Posterior vena cava (tissue), 2 donors: ENCODE measurements at regions of chr3 and their contacts with region 1.

Region 1: DNA sequence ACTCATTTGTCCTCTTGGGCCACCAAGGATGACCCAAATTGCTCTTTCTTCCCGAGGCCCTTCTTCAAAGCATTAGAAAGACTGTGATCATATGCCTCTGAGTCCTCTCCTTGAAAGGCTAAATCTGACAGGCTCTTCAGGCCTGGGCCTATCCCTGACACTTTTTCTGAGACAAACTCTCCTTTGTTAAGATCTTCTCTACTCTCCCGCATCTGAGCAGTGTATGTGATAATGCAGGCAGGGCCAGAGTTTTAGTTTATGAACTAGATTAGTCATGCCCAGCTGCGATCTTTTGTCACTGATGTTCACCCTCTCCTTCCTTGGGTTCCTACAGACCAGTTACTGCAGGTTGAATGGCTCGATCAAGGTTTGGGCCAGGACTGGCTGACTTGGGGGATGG is 39.2 kb downstream of the MASP1 start:
- DNase-seq: no peak

Region 2: DNA sequence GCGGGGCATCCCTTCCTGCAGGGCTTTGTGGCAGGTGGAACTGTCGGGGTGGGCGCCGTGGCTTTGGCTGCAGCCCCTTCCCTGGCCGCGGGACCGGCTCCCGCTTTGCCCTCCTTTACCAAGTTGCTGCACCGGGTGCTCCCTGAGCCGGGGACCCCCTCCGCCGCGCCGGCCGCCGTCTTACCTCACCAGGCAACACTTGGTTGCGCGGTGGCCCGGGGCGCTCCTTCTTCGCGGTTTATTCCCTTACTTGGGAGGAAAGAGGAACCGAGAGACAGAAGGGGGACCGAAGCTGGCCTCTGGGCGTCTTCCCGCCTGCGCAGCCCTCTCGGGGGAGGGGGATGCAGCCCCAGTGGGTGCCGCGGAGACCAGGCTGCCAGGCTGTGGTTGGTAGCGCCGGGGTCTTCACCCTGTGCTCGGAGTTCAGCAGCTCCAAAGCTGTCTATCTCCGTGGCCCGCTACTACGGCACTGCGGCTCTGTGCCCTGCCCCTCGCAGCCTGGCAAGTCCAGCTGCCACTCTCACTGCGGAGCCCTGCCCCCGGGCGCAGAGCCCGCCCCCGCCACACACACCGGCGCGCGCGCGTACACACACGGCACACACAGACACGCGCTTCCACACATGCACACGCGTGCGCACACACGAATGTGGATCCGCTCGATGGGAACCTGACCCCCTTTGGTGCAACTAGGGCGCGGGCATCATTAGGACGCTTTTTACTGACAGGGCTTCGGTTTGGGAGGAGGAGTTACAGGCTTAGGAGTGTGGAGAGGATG is 890.4 kb before region 1 on chr3 and contains the start of gene DGKG:
- intact Hi-C with region 1: loop called in 1 of 2 experiments (anchors 5 kb)
- DNase-seq: peak; percentile 89
- total RNA-seq, gene DGKG: 16.7 to 18.2 TPM

Region 3: GRCh38 chr3:187197057-187197649 is 55.2 kb before region 1 on chr3 and contains the start of gene RTP1:
- intact Hi-C with region 1: loop called in 1 of 2 experiments (anchors 2 kb)
- DNase-seq: no peak
- total RNA-seq, gene RTP1: not detected

Region 4: GRCh38 chr3:187237741-187238140 is 14.6 kb before region 1 on chr3:
- intact Hi-C with region 1: no loop called
- DNase-seq: no peak